Dorsolateral prefrontal cortex (tissue), 120 donors: ENCODE measurements at regions of chr7 and their contacts with region 1.

Region 1: DNA sequence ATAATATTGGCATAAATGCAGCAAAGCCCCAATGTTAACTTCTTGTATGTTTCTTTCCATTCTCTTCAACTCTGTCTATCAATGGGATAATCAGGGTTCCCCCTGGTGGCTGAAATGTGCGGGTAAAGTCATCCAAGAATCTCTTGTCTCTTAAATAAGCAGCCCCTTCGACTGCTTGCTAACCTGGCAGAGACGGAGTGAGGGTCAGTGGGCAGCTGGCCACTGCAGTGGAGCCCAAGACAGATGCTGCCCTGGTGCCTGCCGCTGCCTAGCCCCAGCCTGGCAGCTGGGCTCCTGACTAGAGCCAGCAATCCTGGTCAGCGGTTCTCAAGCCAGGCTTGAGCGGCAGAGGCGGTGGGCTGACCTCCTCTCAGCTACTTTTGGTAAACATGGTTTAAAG is 248.9 kb downstream of the COBL start:
- DNase-seq: peak in 6 of 10 donors; percentile 33 to 86 (median 61)
- H3K4me3 ChIP-seq: peak overlapping the region in 25 of 59 donors; percentile 2 to 51 (median 12)
- H3K27ac ChIP-seq: peak overlapping the region in 58 of 59 donors; percentile 5 to 94 (median 78)
- H3K27me3 ChIP-seq: no peaks in the 10 kb centered on the region
- CTCF ChIP-seq: peak; percentile 51 to 83 (median 74)

Region 2: DNA sequence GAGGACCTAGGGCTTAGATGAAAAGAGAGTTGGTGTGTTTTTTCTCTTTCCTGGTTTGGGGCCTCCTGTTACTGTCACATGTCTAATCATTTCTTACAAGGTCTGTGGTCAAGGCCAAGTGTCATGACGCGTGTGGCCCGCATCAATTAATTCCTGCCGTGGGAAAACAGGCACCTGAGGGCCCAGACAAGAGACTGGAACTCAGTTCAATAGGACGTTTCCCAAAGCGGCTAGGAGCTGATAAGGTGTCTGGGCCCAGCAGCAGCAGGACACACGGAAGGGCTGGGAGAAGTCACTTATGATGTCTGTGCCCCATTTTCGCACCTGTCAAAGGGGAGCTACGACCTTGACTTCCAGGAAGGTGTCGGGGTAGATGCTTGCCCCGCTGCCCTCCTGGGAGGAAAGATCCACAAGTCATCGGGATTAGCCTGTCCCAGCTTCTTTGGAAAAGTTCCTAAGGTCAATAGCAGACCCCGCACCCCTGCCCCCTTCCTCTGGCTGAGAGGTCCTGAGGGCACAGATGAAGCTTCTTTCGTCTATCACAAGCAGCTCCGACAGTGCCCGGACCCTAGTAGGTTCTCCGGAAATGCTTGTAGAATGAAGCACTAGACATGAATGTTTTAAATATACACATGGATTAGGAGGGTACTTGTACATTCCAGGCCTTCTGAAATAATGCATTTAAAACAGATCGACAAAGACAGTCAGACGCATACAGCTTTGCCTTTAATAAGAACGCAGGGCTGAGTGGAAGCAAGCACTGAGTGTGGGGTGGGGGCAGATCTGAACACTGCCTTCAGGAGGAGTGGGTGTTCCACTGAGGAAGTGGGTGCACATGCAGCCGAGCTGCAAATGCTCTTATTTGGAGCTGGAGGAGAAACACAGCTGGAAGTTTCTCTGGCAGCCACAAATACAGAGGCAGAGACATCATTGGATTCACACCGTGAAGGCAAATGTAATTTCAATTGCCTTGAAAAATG is 47.6 kb before region 1 on chr7:
- intact Hi-C with region 1: no loop called
- DNase-seq: no peak
- H3K4me3 ChIP-seq: no peak overlapping the region
- H3K27ac ChIP-seq: peak overlapping the region in 8 of 59 donors; percentile 12 to 53 (median 36)
- H3K27me3 ChIP-seq: no peaks in the 10 kb centered on the region
- CTCF ChIP-seq: no peak

Region 3: DNA sequence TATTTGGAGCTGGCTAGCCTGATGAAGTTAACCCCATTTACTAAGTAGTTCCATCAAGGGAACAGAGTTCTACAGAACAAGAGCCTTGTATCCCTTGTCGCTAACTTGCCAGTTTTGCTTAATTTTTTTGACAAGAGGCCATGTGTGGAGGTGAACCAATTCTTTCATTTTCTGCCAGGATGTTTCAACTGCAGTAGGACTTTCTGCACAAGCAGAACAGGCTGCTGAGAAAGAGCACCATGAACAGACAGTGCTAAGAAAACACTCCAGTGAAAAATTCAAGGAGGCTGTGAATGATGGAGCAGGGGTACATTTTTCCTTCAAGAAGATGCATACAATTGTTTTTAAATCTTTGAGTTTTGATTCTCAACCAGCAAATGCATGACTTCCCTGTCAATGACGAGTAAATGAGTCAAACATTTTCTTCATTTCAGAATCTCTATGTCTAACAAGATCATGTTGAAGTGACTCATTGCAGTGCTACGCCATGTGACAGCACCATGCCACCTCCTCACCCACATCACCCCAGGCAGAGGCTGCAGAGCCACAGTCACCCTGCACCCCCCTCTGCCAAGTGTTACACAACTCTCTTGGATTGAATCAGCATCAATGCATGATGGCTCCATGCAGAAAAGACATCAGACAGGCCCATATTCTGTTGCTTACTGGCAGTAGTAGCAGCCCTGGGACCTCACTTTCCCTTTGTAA is 55.7 kb after region 1 on chr7:
- intact Hi-C with region 1: loop called in 1 of 2 experiments (anchors 10 kb)
- DNase-seq: peak in 9 of 10 donors; percentile 48 to 93 (median 75)
- H3K4me3 ChIP-seq: no peak overlapping the region
- H3K27ac ChIP-seq: peak overlapping the region; percentile 1 to 91 (median 74)
- H3K27me3 ChIP-seq: no peaks in the 10 kb centered on the region
- CTCF ChIP-seq: no peak